Activated CD4-positive, alpha-beta memory T cell treated with anti-CD3 and anti-CD28 coated beads, Interleukin-2, amount 10 ng/mL, durations not matched to agents 7 days and 5 days (primary cell): ENCODE measurements at regions of chr1 and their contacts with region 1.

Region 1: GRCh38 chr1:92310185-92310597 is 11.3 kb downstream of the RPAP2 start:
- DNase-seq: no peak
- H3K4me3 Mint-ChIP-seq: no peak overlapping the region
- H3K27ac Mint-ChIP-seq: no peak overlapping the region
- H3K4me1 Mint-ChIP-seq: peaks cover 38% of the 10 kb centered on the region
- H3K27me3 Mint-ChIP-seq: no peaks in the 10 kb centered on the region

Region 2: DNA sequence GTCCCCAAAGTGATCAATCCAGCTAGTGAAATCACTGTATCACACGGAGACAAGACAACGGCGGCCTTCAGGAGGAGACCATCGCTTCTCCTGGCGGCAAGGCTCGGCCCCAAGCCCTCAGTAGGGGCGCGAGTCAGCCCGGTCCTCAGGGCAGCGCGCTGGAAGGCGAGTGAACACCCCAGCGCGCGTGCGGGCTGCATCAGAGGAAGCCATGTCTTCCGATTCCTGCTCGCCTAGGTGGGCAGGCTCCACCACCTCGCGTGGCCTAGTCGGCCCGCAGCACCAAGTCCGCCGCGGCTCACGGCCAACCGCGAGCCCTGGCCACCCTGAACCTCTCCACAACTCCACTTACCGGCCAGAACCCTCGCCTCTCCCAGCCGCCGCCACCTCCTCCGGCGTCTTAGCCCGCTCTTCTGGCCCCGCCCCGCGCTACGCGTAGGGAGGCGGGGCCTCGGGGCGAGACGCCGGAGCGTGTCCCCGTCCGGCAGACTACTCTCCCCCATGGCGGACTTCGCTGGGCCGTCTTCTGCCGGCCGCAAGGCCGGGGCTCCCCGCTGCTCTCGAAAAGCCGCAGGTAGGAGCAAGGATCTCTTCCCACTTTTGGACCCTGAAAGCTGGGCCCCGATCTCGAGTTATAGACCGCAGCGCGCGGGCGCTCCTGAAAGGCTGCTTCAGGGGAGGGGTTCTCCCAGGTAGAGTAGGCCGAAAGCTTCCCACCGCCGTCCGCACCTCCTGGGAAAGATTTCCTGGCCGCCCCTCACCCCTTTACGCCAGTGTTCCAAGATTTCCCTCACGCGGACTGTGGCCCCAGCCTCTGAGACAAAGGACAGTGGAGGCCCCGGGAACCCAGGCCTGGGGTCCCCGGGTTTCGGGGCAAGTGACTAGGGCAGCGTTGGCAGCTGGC is 11.4 kb before region 1 on chr1 and contains the starts of genes GLMN and RPAP2:
- CTCF ChIA-PET with region 1: interaction called, 11 read pairs
- POLR2A ChIA-PET with region 1: interaction called, 16 read pairs
- DNase-seq: peak; percentile 77
- H3K4me3 Mint-ChIP-seq: peak within 1 kb of the TSS; percentile 83
- H3K27ac Mint-ChIP-seq: peak within 1 kb of the TSS; percentile 81
- H3K4me1 Mint-ChIP-seq: peaks cover 49% of the 10 kb centered on the region
- H3K27me3 Mint-ChIP-seq: no peaks in the 10 kb centered on the region
- total RNA-seq, gene GLMN: 18.2 to 18.7 TPM
- total RNA-seq, gene RPAP2: 31.6 to 36.5 TPM

Region 3: DNA sequence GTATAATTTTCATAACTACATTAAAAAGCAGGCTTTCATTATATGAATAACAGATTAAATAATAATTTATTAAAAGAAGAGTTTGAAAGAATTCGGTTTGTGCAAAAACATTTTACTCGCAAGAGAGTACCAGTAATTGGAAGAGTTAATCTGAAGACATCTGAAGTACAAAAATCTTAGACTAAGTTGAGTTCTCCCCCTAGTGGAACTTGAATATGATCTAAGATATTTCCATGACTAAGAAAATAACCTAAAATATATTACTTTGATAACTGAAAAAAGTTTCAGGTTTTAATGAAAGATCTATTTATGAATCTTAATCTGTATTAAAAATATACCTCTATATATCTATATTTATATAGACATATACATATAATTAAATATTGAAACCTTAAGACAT is 289.0 kb after region 1 on chr1:
- CTCF ChIA-PET with region 1: interaction called, 17 read pairs
- POLR2A ChIA-PET with region 1: interaction called, 3 read pairs
- DNase-seq: no peak
- H3K4me3 Mint-ChIP-seq: no peak overlapping the region
- H3K27ac Mint-ChIP-seq: no peak overlapping the region
- H3K4me1 Mint-ChIP-seq: peaks cover 24% of the 10 kb centered on the region
- H3K27me3 Mint-ChIP-seq: no peaks in the 10 kb centered on the region

Region 4: DNA sequence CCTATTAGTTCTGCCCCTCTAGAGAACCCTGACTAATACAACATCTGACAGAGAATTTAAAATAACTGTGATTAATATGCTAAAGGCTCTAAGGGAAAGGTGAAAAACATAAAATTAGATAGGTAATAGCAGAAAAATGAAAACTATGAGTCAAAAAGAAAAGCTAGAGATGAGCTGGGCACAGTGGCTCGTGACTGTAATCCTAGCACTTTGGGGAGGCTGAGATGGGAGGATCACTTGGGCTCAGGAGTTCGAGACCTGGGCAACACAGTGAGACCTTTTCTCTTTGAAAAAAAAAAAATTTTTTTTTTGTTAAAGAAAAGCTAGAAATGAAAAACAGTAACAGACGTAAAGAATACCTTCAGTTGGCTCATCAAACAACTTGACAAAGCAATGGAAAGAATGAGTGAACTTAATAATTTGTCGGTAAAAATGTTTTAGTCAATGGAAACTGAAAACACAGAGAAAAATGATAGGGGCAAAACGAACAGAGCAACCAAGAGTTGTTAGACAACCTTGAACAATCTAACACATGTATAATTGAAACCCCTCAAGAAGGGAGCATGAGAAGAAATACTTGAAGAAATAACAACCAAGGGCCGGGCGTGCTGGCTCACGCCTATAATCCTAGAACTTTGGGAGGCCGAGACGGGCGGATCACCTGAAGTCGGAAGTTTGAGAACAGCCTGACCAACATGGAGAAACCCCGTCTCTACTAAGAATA is 309.4 kb after region 1 on chr1:
- CTCF ChIA-PET with region 1: interaction called, 13 read pairs
- POLR2A ChIA-PET with region 1: no interaction called
- DNase-seq: no peak
- H3K4me3 Mint-ChIP-seq: no peak overlapping the region
- H3K27ac Mint-ChIP-seq: no peak overlapping the region
- H3K4me1 Mint-ChIP-seq: peaks cover 1% of the 10 kb centered on the region
- H3K27me3 Mint-ChIP-seq: no peaks in the 10 kb centered on the region